Activated CD8-positive, alpha-beta T cell treated with anti-CD3 and anti-CD28 coated beads for 36 hours (primary cell): ENCODE measurements at regions of chr1 and their contacts with region 1.

Region 1: DNA sequence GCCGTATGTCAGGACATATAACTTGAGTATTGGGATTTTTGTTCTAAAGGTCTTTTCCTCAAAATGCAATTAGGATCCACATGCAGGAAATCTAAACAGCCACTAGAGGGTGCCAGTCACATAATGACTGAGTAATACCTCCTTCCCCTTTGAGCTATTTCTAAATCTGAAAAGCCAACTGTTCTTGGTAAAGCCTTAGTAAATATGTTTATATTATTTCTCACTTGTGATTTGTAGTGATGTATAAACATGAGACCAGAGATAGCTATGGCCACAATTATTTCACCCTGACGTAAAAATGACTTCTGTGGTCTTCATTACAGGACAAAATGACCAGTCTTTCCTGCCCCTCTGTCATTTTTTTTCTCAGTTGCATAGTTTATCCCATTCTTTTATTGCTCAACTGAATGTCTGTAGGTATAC is 41.0 kb upstream of the DR1 start:
- DNase-seq: peak; percentile 61
- ATAC-seq: peak; percentile 53
- H3K4me3 Mint-ChIP-seq: no peak overlapping the region
- H3K27ac Mint-ChIP-seq: no peak overlapping the region
- H3K4me1 Mint-ChIP-seq: no peaks in the 10 kb centered on the region
- H3K27me3 Mint-ChIP-seq: no peaks in the 10 kb centered on the region
- CTCF ChIP-seq: peak; percentile 89

Region 2: DNA sequence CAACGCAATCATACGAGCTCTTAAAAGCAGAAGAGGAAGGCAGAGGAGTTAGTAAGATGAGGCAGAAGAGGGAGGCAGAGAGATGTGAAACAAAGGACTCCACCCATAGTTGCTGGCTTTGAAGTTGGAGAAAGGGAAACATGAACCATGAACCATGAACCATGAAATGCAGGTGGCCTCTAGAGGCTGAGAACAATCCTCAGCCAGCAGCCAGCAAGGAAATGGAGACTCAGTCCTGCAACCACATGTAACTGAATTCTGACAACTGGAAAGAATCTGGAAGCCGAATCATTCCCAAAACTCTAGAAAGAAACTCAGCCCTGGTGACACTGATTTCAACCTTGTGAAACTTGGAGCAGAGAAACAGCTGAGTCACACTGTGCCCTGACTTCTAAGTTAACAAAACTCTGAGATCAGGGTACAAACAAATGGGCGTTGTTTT is 353.6 kb before region 1 on chr1:
- CTCF ChIA-PET with region 1: no interaction called
- POLR2A ChIA-PET with region 1: no interaction called
- intact Hi-C with region 1: no loop called
- DNase-seq: peak; percentile 20
- ATAC-seq: peak; percentile 69
- H3K4me3 Mint-ChIP-seq: no peak overlapping the region
- H3K27ac Mint-ChIP-seq: no peak overlapping the region
- H3K4me1 Mint-ChIP-seq: peaks cover 43% of the 10 kb centered on the region
- H3K27me3 Mint-ChIP-seq: no peaks in the 10 kb centered on the region
- CTCF ChIP-seq: no peak

Region 3: GRCh38 chr1:93283496-93283895 is 21.2 kb before region 1 on chr1:
- CTCF ChIA-PET with region 1: interaction called, 20 read pairs
- POLR2A ChIA-PET with region 1: no interaction called
- intact Hi-C with region 1: no loop called
- DNase-seq: no peak
- ATAC-seq: no peak
- H3K4me3 Mint-ChIP-seq: no peak overlapping the region
- H3K27ac Mint-ChIP-seq: no peak overlapping the region
- H3K4me1 Mint-ChIP-seq: no peaks in the 10 kb centered on the region
- H3K27me3 Mint-ChIP-seq: no peaks in the 10 kb centered on the region
- CTCF ChIP-seq: no peak

Region 4: DNA sequence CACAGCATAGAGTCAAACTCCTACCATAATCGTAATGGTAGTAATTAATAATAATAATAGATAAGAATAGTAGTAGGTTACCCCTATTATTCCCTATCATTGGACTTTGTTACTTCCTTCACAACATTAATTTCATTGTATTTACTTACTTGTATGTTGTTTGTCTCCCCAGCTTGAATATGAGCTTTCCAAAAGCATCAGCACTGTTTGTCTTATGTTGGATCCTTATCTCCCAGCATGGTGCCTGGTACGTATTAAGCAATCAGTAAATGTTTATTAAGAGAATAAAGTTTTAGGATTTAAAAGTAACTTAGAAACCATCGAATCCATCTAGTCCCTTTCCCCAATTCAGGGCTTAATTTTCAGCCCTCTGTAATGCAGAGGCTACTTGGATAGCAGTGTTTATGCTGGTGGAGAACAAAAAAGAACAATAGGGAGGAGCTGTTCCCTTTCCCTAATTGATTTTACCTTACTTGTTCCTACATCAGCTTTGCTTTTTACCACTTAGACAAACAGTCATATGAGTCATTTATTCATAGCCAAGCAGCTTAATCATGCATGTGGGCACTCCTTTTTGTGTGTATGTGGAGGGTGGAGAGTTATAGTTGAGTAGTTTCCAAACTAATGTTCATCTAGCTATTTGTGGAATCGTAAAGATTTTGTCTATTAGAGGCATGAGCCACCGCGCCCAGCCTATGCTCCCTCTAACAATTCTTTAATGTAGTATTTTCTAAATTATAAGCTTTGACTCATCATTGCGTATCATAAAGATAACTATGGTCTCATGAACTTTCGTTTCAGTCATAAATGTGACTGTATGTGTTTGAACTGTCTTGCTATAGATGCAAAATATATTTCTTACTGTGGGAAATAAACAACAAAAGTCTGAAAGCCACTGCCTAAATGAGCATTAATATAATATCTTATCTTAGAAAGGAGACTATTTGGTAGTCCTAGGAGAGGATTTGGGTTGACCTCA is 20.0 kb after region 1 on chr1:
- CTCF ChIA-PET with region 1: interaction called, 25 read pairs
- POLR2A ChIA-PET with region 1: no interaction called
- intact Hi-C with region 1: no loop called
- DNase-seq: no peak
- ATAC-seq: no peak
- H3K4me3 Mint-ChIP-seq: no peak overlapping the region
- H3K27ac Mint-ChIP-seq: no peak overlapping the region
- H3K4me1 Mint-ChIP-seq: no peaks in the 10 kb centered on the region
- H3K27me3 Mint-ChIP-seq: no peaks in the 10 kb centered on the region
- CTCF ChIP-seq: no peak

Region 5: GRCh38 chr1:93353286-93353685 is 48.6 kb after region 1 on chr1:
- CTCF ChIA-PET with region 1: interaction called, 12 read pairs
- POLR2A ChIA-PET with region 1: no interaction called
- intact Hi-C with region 1: no loop called
- DNase-seq: no peak
- ATAC-seq: no peak
- H3K4me3 Mint-ChIP-seq: no peak overlapping the region
- H3K27ac Mint-ChIP-seq: peak overlapping the region; percentile 34
- H3K4me1 Mint-ChIP-seq: peaks cover 55% of the 10 kb centered on the region
- H3K27me3 Mint-ChIP-seq: no peaks in the 10 kb centered on the region
- CTCF ChIP-seq: no peak

Region 6: GRCh38 chr1:93447516-93448291 is 143.0 kb after region 1 on chr1 and contains the start of gene FNBP1L:
- CTCF ChIA-PET with region 1: interaction called, 17 read pairs
- POLR2A ChIA-PET with region 1: no interaction called
- intact Hi-C with region 1: no loop called
- DNase-seq: peak; percentile 61
- ATAC-seq: peak; percentile 83
- H3K4me3 Mint-ChIP-seq: peak within 1 kb of the TSS; percentile 77
- H3K27ac Mint-ChIP-seq: no peak within 1 kb of the TSS
- H3K4me1 Mint-ChIP-seq: peaks cover 12% of the 10 kb centered on the region
- H3K27me3 Mint-ChIP-seq: peaks cover 51% of the 10 kb centered on the region
- CTCF ChIP-seq: no peak
- total RNA-seq, gene FNBP1L: 0.20 to 0.25 TPM

Region 7: GRCh38 chr1:93846211-93846991 is 541.7 kb after region 1 on chr1:
- CTCF ChIA-PET with region 1: interaction called, 13 read pairs
- POLR2A ChIA-PET with region 1: no interaction called
- intact Hi-C with region 1: loop called (anchors 10 kb)
- DNase-seq: peak; percentile 88
- ATAC-seq: peak; percentile 45
- H3K4me3 Mint-ChIP-seq: peak overlapping the region; percentile 80
- H3K27ac Mint-ChIP-seq: peak overlapping the region; percentile 92
- H3K4me1 Mint-ChIP-seq: peaks cover 18% of the 10 kb centered on the region
- H3K27me3 Mint-ChIP-seq: peaks cover 1% of the 10 kb centered on the region
- CTCF ChIP-seq: no peak